ENCODE measurements at regions of chr13 and their contacts with region 1.

Region 1: GRCh38 chr13:99398071-99398470 is 90.9 kb upstream of the GPR183 start:
- DNase-seq: no peak
- H3K4me3 ChIP-seq: no peak overlapping the region
- H3K27ac ChIP-seq: no peak overlapping the region
- H3K4me1 ChIP-seq: no peaks in the 10 kb centered on the region
- H3K27me3 ChIP-seq: no peaks in the 10 kb centered on the region
- CTCF ChIP-seq: no peak
- EP300 ChIP-seq: no peak
- RAD21 ChIP-seq: no peak

Region 2: DNA sequence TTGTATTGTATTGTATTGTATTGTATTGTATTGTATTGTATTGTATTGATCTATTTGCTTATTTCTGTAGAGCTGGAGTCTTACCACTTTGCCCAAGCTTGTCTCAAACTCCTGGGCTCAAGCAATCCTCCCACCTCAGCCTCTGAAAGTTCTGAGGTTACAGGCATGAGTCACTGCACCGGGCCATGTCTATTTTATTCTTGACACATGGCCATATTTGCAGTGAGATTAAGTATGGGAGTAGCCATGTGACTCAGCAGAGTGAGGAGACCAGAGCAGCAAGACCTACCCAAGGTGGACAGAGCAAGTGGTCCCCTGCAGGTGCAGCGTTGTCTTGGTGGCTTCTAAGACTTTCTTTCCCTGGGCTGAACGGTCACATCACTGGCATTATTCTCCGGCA is 246.6 kb before region 1 on chr13:
- CTCF ChIA-PET with region 1: no interaction called
- POLR2A ChIA-PET with region 1: no interaction called
- DNase-seq: no peak
- H3K4me3 ChIP-seq: no peak overlapping the region
- H3K27ac ChIP-seq: peak overlapping the region in 1 of 2 experiments; percentile 59; a peak in 2 of 4 replicates
- H3K4me1 ChIP-seq: peaks cover 4 to 6% of the 10 kb centered on the region in 2 experiments; a peak in 1 of 4 replicates
- H3K27me3 ChIP-seq: no peaks in the 10 kb centered on the region
- CTCF ChIP-seq: no peak
- EP300 ChIP-seq: no peak
- RAD21 ChIP-seq: no peak

Region 3: DNA sequence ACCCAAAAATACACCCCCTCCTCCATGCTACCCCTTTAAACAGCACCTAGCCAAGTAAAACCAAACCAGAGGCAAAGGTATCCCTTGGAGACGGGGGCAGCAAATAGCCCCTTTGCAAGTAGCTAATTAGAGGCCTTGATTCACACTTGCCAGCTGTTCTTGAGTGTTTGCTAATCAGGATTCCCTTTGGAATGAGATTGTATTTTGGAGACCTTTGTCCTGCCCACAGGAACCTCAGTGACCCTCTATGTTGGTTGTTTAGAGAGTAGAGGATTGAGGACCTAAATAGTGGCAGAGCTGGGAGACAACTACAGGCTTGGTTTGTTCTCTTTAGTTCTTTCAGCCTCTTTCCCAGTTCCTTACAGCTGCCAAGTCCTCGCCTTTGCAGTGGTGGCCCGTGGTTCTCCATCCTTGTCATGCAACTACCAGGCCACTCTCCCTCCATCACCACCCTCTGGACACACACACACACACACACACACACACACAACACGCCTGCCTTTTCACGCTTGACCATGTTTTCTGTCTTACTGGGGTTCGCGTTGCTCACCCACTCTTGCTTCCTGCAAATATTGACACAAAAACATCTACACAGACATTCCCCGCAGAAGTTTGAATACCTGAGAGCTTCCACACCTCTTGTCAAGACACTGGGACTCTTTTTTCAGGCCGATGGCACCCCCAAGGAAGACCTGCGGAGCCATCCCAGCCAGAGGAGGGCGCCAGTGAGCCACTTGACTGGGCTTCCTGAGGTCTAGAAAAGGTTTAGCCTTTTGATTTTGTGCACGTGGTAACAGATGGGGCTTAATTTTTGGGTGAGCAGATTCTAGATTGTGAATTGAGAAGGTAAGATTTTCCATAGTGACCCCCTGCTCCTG is 10.9 kb before region 1 on chr13:
- CTCF ChIA-PET with region 1: interaction called, 10 read pairs
- POLR2A ChIA-PET with region 1: no interaction called
- DNase-seq: peak; percentile 58
- H3K4me3 ChIP-seq: no peak overlapping the region; a peak in 1 of 4 replicates
- H3K27ac ChIP-seq: no peak overlapping the region
- H3K4me1 ChIP-seq: peaks cover 0 to 5% of the 10 kb centered on the region in 2 experiments; a peak in 1 of 4 replicates
- H3K27me3 ChIP-seq: no peaks in the 10 kb centered on the region
- CTCF ChIP-seq: peak; percentile 76
- EP300 ChIP-seq: no peak
- RAD21 ChIP-seq: peak; percentile 31

Region 4: DNA sequence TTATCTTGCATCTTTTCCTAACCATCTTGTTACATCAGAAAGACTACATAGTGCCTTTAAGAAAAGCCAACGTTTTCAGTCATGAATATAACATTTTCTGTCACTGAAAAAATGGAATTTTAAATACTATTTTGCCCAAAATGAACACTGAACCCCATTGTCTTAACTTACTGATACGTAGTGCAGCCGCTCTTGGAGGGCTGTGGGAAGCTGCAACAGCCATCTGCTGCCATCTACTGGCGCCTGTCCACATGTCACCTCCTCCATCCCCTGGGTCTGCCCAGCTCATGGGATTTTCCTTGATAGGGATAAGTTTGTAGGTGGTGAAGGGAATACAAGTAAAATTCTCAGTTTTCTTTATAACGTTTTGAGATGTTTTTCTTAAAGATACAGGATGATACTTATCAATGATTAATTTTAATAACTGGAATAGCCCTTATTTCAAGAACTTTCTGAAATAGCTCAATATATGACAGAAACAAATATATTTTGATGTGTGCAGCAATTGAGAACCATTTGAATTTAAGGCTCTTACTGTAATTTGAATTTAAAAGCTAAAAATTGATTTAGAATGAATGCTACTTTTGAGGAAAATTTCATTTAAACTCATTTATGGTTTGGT is 1116.8 kb after region 1 on chr13:
- CTCF ChIA-PET with region 1: no interaction called
- POLR2A ChIA-PET with region 1: no interaction called
- DNase-seq: peak; percentile 92
- H3K4me3 ChIP-seq: no peak overlapping the region; a peak in 1 of 4 replicates
- H3K27ac ChIP-seq: no peak overlapping the region
- H3K4me1 ChIP-seq: peaks cover 14 to 19% of the 10 kb centered on the region in 2 experiments; a peak in 3 of 4 replicates
- H3K27me3 ChIP-seq: no peaks in the 10 kb centered on the region
- CTCF ChIP-seq: peak; percentile 99
- EP300 ChIP-seq: no peak
- RAD21 ChIP-seq: peak; percentile 99

Measured in SK-N-SH (cell line).